Activated naive CD8-positive, alpha-beta T cell treated with anti-CD3 and anti-CD28 coated beads, Interleukin-2, amount 10 ng/mL, durations not matched to agents 7 days and 5 days (primary cell): ENCODE measurements at regions of chr2 and their contacts with region 1.

Region 1: GRCh38 chr2:161992526-161992925 is 81.5 kb downstream of the DPP4 start:
- DNase-seq: peak; percentile 50
- ATAC-seq: peak; percentile 87
- H3K4me3 Mint-ChIP-seq: peak overlapping the region; percentile 79
- H3K27ac Mint-ChIP-seq: peak overlapping the region; percentile 94
- H3K4me1 Mint-ChIP-seq: peaks cover 64% of the 10 kb centered on the region
- H3K27me3 Mint-ChIP-seq: no peaks in the 10 kb centered on the region

Region 2: DNA sequence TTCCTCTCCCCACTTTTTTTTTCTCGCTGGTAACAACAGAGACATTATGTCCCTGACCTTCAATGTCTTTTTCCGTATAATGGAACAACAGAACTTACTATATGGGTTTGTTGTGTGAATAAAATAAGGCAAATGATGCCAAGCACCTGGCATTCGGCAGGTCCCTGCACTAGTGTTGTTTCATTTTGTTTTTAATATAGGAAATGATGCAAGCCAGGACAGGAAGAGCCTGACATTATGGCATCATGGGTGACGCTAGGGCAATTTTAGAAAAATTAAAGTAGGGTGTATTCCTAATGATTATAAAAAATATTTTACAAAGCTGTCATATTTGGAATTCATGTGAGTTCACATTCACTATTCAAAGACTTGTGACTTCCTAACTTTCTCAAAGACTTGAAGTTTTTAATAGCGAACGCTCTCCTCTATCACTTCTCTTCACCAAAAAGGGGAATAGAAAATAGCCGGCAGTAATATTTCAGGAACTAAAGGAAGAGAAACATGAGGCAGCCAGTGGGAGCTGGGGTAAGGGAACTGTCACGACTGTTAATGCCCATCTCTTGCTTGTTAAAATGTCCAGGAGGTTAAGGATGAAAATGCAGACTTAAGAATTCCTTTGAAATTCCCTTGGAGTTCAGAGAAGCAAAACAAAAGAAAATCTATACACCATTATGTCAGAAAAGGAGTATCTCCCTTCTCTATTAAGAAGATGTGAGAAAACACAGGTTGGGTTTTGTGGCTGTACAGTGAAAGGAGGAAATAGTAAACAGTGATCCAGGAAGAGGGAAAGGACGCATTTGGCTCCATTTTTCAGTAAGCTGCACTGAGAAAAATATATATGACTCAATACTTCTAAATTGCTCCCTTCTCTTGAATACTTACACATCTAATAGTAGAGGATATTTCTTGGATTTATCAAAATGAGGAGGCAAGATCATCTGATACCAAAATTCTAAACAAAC is 21.3 kb after region 1 on chr2:
- POLR2A ChIA-PET with region 1: interaction called, 81 read pairs
- DNase-seq: no peak
- ATAC-seq: peak; percentile 30
- H3K4me3 Mint-ChIP-seq: peak overlapping the region; percentile 78
- H3K27ac Mint-ChIP-seq: peak overlapping the region; percentile 96
- H3K4me1 Mint-ChIP-seq: peaks cover 62% of the 10 kb centered on the region
- H3K27me3 Mint-ChIP-seq: no peaks in the 10 kb centered on the region

Region 3: DNA sequence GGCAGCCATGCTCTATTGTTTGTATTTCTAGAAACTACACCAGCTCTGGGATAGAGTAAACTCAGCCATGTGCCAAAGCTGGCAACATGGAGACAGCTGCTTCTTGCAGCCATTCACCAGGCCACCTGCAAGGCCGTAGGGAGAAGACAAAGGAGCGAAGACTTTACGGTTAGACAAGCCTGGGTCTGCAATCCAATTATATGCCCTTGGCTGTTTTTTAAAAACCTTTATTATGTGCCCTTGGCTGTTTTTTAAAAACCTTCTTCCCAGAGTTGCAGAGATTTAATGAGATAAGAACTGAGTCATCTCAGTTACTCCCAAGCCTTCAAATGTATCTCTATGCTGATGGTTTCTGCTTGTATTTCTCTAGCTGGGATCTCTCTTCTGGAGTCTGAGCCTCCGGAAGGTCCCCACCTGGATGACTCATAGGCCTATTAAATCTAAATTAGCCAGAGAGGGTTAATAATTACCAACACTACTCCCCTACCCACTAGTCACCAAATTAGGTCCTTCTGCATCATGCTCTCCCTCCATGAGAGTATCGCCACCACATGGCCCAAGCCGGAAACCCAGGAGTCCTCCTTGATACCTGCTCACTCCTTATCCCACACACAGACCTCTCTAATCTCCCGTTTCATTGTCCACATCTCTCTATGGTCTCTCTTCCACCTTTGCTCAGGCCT is 98.9 kb after region 1 on chr2:
- POLR2A ChIA-PET with region 1: no interaction called
- DNase-seq: no peak
- ATAC-seq: no peak
- H3K4me3 Mint-ChIP-seq: no peak overlapping the region
- H3K27ac Mint-ChIP-seq: no peak overlapping the region
- H3K4me1 Mint-ChIP-seq: peaks cover 12% of the 10 kb centered on the region
- H3K27me3 Mint-ChIP-seq: no peaks in the 10 kb centered on the region

Region 4: GRCh38 chr2:162118559-162119031 is 126.1 kb after region 1 on chr2:
- POLR2A ChIA-PET with region 1: no interaction called
- DNase-seq: no peak
- ATAC-seq: no peak
- H3K4me3 Mint-ChIP-seq: no peak overlapping the region
- H3K27ac Mint-ChIP-seq: peak overlapping the region; percentile 40
- H3K4me1 Mint-ChIP-seq: peaks cover 13% of the 10 kb centered on the region
- H3K27me3 Mint-ChIP-seq: no peaks in the 10 kb centered on the region

Region 5: DNA sequence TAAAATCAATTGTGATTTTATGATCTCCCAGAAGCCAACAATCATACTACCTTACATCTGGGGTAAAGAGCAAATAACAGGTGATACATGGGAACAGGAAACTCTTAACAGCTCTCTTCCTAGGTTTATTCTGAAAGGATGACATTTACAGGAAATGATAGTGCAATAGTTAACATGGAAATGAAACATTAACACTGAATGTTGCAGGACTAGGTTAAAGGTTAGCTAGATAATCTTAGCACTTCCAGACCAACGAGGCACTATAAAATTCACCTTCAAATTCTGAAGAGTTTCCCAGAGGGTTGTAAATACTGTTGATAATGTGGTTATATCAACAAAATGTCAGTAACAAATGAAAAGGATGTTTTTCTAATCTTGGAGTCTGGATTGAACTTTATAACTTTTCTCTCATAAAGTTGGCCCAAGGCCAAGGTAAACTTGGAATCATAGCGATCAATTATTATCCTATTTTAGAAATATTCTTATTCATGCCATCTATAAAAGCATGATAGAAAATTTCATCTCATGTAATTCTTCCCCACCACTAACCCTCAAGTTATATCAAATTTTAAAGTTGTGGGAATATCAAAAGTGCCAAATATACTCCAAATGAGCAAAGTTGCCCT is 192.4 kb after region 1 on chr2:
- POLR2A ChIA-PET with region 1: no interaction called
- DNase-seq: no peak
- ATAC-seq: no peak
- H3K4me3 Mint-ChIP-seq: no peak overlapping the region
- H3K27ac Mint-ChIP-seq: no peak overlapping the region
- H3K4me1 Mint-ChIP-seq: peaks cover 3% of the 10 kb centered on the region
- H3K27me3 Mint-ChIP-seq: peaks cover 21% of the 10 kb centered on the region